ENCODE measurements at regions of chr13 and their contacts with region 1.

Region 1: DNA sequence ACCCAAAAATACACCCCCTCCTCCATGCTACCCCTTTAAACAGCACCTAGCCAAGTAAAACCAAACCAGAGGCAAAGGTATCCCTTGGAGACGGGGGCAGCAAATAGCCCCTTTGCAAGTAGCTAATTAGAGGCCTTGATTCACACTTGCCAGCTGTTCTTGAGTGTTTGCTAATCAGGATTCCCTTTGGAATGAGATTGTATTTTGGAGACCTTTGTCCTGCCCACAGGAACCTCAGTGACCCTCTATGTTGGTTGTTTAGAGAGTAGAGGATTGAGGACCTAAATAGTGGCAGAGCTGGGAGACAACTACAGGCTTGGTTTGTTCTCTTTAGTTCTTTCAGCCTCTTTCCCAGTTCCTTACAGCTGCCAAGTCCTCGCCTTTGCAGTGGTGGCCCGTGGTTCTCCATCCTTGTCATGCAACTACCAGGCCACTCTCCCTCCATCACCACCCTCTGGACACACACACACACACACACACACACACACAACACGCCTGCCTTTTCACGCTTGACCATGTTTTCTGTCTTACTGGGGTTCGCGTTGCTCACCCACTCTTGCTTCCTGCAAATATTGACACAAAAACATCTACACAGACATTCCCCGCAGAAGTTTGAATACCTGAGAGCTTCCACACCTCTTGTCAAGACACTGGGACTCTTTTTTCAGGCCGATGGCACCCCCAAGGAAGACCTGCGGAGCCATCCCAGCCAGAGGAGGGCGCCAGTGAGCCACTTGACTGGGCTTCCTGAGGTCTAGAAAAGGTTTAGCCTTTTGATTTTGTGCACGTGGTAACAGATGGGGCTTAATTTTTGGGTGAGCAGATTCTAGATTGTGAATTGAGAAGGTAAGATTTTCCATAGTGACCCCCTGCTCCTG is 80.0 kb upstream of the GPR183 start:
- DNase-seq: peak; percentile 81 to 94 (median 88)
- ATAC-seq: peak; percentile 22
- H3K4me3 ChIP-seq: no peak overlapping the region
- H3K4me3 Mint-ChIP-seq: peak overlapping the region; percentile 21
- H3K27ac ChIP-seq: peak overlapping the region; percentile 31 to 57
- H3K27ac Mint-ChIP-seq: peak overlapping the region; percentile 88
- H3K4me1 ChIP-seq: peaks cover 67% of the 10 kb centered on the region
- H3K4me1 Mint-ChIP-seq: peaks cover 61% of the 10 kb centered on the region
- H3K27me3 ChIP-seq: no peaks in the 10 kb centered on the region
- H3K27me3 Mint-ChIP-seq: no peaks in the 10 kb centered on the region
- CTCF ChIP-seq: peak; percentile 88

Region 2: GRCh38 chr13:99176309-99177276 is 210.6 kb before region 1 on chr13:
- CTCF ChIA-PET with region 1: interaction called, 4 read pairs
- POLR2A ChIA-PET with region 1: no interaction called
- intact Hi-C with region 1: loop called in 1 of 2 experiments (anchors 5 kb)
- DNase-seq: peak; percentile 64 to 89 (median 74)
- ATAC-seq: peak; percentile 93
- H3K4me3 ChIP-seq: peak overlapping the region; percentile 16
- H3K4me3 Mint-ChIP-seq: peak overlapping the region; percentile 42
- H3K27ac ChIP-seq: no peak overlapping the region
- H3K27ac Mint-ChIP-seq: peak overlapping the region; percentile 76
- H3K4me1 ChIP-seq: peaks cover 41% of the 10 kb centered on the region
- H3K4me1 Mint-ChIP-seq: peaks cover 40% of the 10 kb centered on the region
- H3K27me3 ChIP-seq: no peaks in the 10 kb centered on the region
- H3K27me3 Mint-ChIP-seq: no peaks in the 10 kb centered on the region
- CTCF ChIP-seq: peak; percentile 94

Region 3: GRCh38 chr13:99374994-99375737 is 12.0 kb before region 1 on chr13:
- CTCF ChIA-PET with region 1: interaction called, 8 read pairs
- POLR2A ChIA-PET with region 1: interaction called, 64 read pairs
- intact Hi-C with region 1: no loop called
- DNase-seq: peak in 11 of 14 experiments; percentile 44 to 92 (median 70)
- ATAC-seq: peak; percentile 86
- H3K4me3 ChIP-seq: no peak overlapping the region
- H3K4me3 Mint-ChIP-seq: peak overlapping the region; percentile 8
- H3K27ac ChIP-seq: peak overlapping the region; percentile 58 to 75
- H3K27ac Mint-ChIP-seq: peak overlapping the region; percentile 97
- H3K4me1 ChIP-seq: peaks cover 74% of the 10 kb centered on the region
- H3K4me1 Mint-ChIP-seq: peaks cover 93% of the 10 kb centered on the region
- H3K27me3 ChIP-seq: no peaks in the 10 kb centered on the region
- H3K27me3 Mint-ChIP-seq: no peaks in the 10 kb centered on the region
- CTCF ChIP-seq: no peak

Region 4: GRCh38 chr13:99417201-99418102 is 30.3 kb after region 1 on chr13:
- CTCF ChIA-PET with region 1: interaction called, 11 read pairs
- POLR2A ChIA-PET with region 1: interaction called, 9 read pairs
- intact Hi-C with region 1: loop called in 1 of 2 experiments (anchors 5 kb)
- DNase-seq: peak in 6 of 14 experiments; percentile 41 to 66 (median 52)
- ATAC-seq: peak; percentile 30
- H3K4me3 ChIP-seq: peak overlapping the region; percentile 52
- H3K4me3 Mint-ChIP-seq: no peak overlapping the region
- H3K27ac ChIP-seq: peak overlapping the region; percentile 59 to 76
- H3K27ac Mint-ChIP-seq: no peak overlapping the region
- H3K4me1 ChIP-seq: peaks cover 88% of the 10 kb centered on the region
- H3K4me1 Mint-ChIP-seq: peaks cover 62% of the 10 kb centered on the region
- H3K27me3 ChIP-seq: no peaks in the 10 kb centered on the region
- H3K27me3 Mint-ChIP-seq: no peaks in the 10 kb centered on the region
- CTCF ChIP-seq: no peak

Region 5: DNA sequence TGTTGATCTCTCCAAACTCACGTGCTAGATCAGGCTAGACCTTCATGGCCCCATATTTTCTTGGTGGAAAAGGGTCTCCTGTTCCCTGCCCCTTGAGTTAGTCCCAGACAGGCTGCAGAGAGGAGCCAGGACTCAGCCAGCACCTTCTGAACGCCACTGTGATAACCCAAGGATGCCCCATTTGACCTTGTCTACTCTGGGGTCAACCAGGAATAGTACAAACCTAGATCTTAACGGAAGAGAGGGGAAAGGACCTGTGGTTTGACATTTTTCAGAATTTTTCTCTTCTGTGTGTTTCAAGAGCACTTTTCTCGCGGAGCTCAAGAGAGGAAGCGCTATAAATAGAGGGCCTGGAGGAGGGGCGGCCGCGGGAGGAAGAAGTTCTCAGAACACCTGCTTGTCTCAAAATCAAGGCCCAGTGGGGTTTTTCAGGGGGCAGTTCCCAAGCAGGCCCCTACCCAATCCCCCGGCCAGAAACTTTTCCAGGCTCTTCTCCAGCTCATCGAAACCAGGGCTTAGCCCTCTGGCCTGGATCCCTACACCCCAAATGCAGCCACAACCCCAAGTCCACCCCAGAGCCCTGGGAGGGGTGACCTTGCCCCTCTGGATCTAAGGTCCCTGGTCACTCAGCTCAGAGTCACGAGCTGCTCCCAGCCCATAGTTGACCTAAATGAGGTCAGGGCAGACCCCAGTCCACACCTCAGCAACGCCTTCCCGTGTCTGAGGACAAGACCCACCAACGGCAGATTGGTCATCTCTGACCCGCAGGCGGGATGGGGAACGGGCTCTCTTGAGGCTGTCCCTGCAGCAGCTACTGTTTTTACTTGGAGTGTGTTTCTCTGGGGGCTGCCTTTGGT is 38.6 kb after region 1 on chr13:
- CTCF ChIA-PET with region 1: interaction called, 8 read pairs
- POLR2A ChIA-PET with region 1: interaction called, 9 read pairs
- intact Hi-C with region 1: loop called in 1 of 2 experiments (anchors 5 kb)
- DNase-seq: peak in 13 of 14 experiments; percentile 31 to 78 (median 62)
- ATAC-seq: peak; percentile 53
- H3K4me3 ChIP-seq: peak overlapping the region; percentile 15
- H3K4me3 Mint-ChIP-seq: peak overlapping the region; percentile 64
- H3K27ac ChIP-seq: peak overlapping the region; percentile 81 to 87
- H3K27ac Mint-ChIP-seq: peak overlapping the region; percentile 92
- H3K4me1 ChIP-seq: peaks cover 67% of the 10 kb centered on the region
- H3K4me1 Mint-ChIP-seq: peaks cover 72% of the 10 kb centered on the region
- H3K27me3 ChIP-seq: no peaks in the 10 kb centered on the region
- H3K27me3 Mint-ChIP-seq: no peaks in the 10 kb centered on the region
- CTCF ChIP-seq: no peak

Region 6: DNA sequence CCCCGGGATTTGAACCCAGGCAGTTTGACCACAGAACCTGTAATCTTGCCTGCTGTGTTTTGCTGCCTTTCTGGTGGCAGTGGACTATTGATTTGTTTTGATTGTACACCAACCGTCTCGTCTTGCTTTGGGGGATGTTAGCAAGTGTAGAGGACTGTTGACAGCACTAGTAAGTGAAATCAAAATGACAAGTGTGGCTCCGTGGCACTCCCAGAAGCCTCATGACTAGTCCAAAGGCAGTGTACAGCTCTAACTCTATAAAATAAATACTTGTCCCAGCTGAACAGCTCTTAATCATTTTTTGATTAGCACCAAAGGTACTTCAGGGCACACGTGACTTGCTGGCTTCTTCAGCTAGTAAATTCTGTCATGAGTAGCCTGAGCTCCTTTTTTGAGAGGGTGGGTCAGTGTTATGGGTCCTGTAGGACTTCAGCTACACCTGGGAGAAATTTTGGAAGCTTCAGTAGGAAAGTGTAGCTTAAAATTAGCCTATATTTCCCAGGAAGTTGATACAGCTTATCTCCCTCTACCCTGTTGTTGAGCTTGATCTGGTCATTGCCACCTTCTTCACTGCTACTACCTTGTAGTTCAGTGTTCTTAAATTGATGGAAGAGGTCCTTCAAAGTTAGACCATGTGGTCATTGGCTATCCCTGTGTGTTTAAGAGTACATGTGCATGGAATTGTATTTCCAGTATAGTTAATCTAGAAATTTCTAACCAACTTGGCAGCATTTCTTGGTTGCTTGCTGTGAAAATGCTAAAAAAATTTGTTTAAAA is 129.2 kb after region 1 on chr13:
- CTCF ChIA-PET with region 1: no interaction called
- POLR2A ChIA-PET with region 1: no interaction called
- intact Hi-C with region 1: loop called in 1 of 2 experiments (anchors 5 kb)
- DNase-seq: no peak
- ATAC-seq: no peak
- H3K4me3 ChIP-seq: no peak overlapping the region
- H3K4me3 Mint-ChIP-seq: no peak overlapping the region
- H3K27ac ChIP-seq: no peak overlapping the region
- H3K27ac Mint-ChIP-seq: no peak overlapping the region
- H3K4me1 ChIP-seq: peaks cover 10% of the 10 kb centered on the region
- H3K4me1 Mint-ChIP-seq: peaks cover 53% of the 10 kb centered on the region
- H3K27me3 ChIP-seq: no peaks in the 10 kb centered on the region
- H3K27me3 Mint-ChIP-seq: no peaks in the 10 kb centered on the region
- CTCF ChIP-seq: no peak

Region 7: DNA sequence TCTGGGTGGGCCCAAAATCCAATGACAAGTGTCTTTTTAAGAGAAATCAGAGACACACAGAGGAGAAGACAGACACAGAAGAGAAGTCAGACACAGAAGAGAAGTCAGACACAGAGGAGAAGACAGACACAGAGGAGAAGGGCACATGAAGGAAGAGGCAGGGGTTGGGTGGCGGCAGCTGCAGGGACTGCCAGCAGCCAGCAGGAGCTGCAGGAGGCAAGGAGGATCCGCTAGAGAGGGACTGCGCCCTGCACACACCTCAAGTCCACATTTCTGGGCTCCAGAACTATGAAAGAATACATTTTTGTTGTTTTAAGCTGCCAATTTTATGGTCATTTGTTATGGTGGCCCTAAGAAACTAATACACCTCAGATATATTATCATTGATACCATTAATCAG is 443.8 kb after region 1 on chr13:
- CTCF ChIA-PET with region 1: no interaction called
- POLR2A ChIA-PET with region 1: no interaction called
- intact Hi-C with region 1: no loop called
- DNase-seq: no peak
- ATAC-seq: no peak
- H3K4me3 ChIP-seq: no peak overlapping the region
- H3K4me3 Mint-ChIP-seq: no peak overlapping the region
- H3K27ac ChIP-seq: no peak overlapping the region
- H3K27ac Mint-ChIP-seq: no peak overlapping the region
- H3K4me1 ChIP-seq: no peaks in the 10 kb centered on the region
- H3K4me1 Mint-ChIP-seq: no peaks in the 10 kb centered on the region
- H3K27me3 ChIP-seq: no peaks in the 10 kb centered on the region
- H3K27me3 Mint-ChIP-seq: no peaks in the 10 kb centered on the region
- CTCF ChIP-seq: no peak

Measured in CD4-positive, alpha-beta T cell (primary cell).